ENCODE measurements at regions of chr2 and their contacts with region 1.

Region 1: GRCh38 chr2:85354286-85355072 is at the starts of genes ELMOD3 and RETSAT:
- DNase-seq: peak; percentile 97
- H3K4me3 Mint-ChIP-seq: peak within 1 kb of the TSS; percentile 100
- H3K27ac Mint-ChIP-seq: peak within 1 kb of the TSS; percentile 98
- H3K4me1 Mint-ChIP-seq: peaks cover 44% of the 10 kb centered on the region
- H3K27me3 Mint-ChIP-seq: no peaks in the 10 kb centered on the region
- total RNA-seq, gene ELMOD3: 13.8 and 15.9 TPM in 2 replicates
- total RNA-seq, gene RETSAT: 23.4 and 25.9 TPM in 2 replicates

Region 2: DNA sequence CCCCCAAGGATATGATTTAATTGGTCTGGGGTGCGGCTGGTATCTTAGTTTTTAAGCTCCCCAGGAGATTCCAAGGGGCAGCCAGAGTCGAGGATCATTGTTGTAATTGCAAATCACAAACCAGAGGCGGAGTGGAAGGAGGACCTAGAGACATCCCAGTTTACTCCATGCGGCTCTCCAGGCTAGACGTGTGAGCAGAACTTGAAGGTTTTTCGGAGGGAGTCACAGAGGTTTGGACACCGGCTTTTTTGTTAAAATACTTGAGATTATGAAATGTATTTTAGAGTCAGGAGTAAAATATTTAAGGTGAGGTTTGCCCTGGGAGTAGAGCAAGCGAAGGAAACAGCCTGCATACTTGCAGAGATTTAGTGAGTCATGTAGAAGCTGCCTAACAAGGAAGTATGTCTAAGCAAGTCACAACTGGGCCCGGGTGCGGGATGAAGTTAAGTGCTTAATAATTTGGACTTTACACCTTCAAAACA is 66.2 kb before region 1 on chr2:
- intact Hi-C with region 1: loop called (anchors 1 kb)
- DNase-seq: no peak
- H3K4me3 Mint-ChIP-seq: no peak overlapping the region
- H3K27ac Mint-ChIP-seq: no peak overlapping the region
- H3K4me1 Mint-ChIP-seq: peaks cover 29% of the 10 kb centered on the region
- H3K27me3 Mint-ChIP-seq: no peaks in the 10 kb centered on the region

Region 3: GRCh38 chr2:85409845-85410583 is 55.5 kb after region 1 on chr2 and contains the start of gene CAPG:
- intact Hi-C with region 1: loop called (anchors 1 kb)
- DNase-seq: peak; percentile 33
- H3K4me3 Mint-ChIP-seq: peak within 1 kb of the TSS; percentile 82
- H3K27ac Mint-ChIP-seq: peak within 1 kb of the TSS; percentile 66
- H3K4me1 Mint-ChIP-seq: peaks cover 60% of the 10 kb centered on the region
- H3K27me3 Mint-ChIP-seq: peaks cover 7% of the 10 kb centered on the region
- total RNA-seq, gene CAPG: 35.5 and 38.2 TPM in 2 replicates

Region 4: DNA sequence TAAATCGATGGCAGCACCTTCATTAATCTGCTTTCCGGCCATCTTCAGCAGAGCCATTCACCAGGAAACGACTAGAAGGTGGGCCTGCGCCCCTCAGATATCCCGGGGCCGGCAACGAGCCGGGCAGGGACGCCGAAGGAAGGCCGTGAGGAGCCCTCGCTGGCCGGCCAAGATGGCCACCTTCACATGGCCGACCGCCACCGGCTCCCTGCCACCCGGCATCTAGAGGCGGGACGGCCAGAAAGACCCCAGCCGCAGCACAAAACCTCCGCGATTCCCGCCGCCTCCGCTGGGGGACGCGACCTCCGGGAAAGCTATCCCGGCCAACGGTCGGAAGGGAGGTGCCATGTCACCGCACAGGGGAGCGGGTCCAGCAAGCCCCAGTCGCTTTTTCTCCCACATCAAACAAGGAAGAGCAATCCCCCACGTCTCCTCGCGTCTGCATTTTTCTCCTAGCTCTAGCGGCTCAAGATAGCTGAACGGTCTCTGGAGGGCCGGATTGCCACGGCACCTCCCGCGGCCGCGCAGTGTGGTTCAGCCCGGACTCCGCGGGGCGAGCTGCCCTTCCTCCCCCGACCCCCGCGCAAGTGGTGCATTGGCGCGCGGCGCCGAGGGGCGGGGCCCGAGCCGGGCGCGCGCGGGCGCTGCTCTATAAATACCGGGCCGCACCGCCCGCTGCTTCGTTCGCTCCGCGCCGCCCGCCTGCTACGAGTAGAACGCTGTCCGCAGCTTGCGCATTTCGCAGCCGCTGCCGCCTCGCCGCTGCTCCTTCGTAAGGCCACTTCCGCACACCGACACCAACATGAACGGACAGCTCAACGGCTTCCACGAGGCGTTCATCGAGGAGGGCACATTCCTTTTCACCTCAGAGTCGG is 184.2 kb after region 1 on chr2 and contains the start of gene MAT2A:
- intact Hi-C with region 1: loop called (anchors 1 kb)
- DNase-seq: peak; percentile 88
- H3K4me3 Mint-ChIP-seq: peak within 1 kb of the TSS; percentile 99
- H3K27ac Mint-ChIP-seq: peak within 1 kb of the TSS; percentile 97
- H3K4me1 Mint-ChIP-seq: peaks cover 56% of the 10 kb centered on the region
- H3K27me3 Mint-ChIP-seq: no peaks in the 10 kb centered on the region
- total RNA-seq, gene MAT2A: 461 and 480 TPM in 2 replicates

Region 5: DNA sequence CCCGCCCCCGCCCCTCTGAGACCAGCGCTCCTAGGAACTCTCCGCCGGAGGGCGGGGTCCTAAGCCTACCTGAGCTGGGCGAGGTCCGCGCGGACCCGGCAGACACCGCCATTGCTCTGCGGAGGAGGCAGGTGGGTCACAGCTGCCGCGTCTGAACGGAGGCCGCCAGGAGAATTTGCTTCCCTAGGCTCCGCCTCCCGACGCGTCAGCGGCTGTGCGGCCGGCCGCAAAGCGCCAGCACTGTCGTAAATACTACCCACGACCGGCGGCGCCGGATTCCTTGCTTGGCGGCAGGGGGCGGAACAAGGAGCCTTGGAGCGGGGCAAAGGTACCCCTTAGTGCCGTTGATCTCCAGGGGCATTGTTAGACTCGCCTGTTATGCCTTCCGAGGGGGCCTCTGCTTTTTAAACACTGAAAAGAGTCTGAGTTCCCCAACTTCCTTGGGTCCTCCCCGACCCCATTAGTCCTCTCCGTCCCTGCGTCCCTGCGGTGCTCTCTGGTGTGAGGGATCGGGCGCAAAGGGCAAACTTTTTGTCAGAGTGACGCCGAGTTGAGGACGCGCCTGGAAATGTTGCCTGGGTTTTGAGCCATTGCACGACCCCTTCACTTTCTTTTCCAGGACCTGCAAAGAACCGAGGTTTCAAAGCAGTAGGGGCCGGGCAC is 207.0 kb after region 1 on chr2 and contains the start of gene GGCX:
- intact Hi-C with region 1: loop called (anchors 1 kb)
- DNase-seq: peak; percentile 88
- H3K4me3 Mint-ChIP-seq: peak within 1 kb of the TSS; percentile 94
- H3K27ac Mint-ChIP-seq: peak within 1 kb of the TSS; percentile 81
- H3K4me1 Mint-ChIP-seq: peaks cover 36% of the 10 kb centered on the region
- H3K27me3 Mint-ChIP-seq: no peaks in the 10 kb centered on the region
- total RNA-seq, gene GGCX: 26.2 and 28.3 TPM in 2 replicates

Region 6: GRCh38 chr2:86105252-86105968 is 750.9 kb after region 1 on chr2 and contains the start of gene POLR1A:
- intact Hi-C with region 1: loop called (anchors 1 kb)
- DNase-seq: peak; percentile 84
- H3K4me3 Mint-ChIP-seq: peak within 1 kb of the TSS; percentile 91
- H3K27ac Mint-ChIP-seq: peak within 1 kb of the TSS; percentile 99
- H3K4me1 Mint-ChIP-seq: peaks cover 55% of the 10 kb centered on the region
- H3K27me3 Mint-ChIP-seq: no peaks in the 10 kb centered on the region
- total RNA-seq, gene POLR1A: 69.7 and 74.6 TPM in 2 replicates

Region 7: DNA sequence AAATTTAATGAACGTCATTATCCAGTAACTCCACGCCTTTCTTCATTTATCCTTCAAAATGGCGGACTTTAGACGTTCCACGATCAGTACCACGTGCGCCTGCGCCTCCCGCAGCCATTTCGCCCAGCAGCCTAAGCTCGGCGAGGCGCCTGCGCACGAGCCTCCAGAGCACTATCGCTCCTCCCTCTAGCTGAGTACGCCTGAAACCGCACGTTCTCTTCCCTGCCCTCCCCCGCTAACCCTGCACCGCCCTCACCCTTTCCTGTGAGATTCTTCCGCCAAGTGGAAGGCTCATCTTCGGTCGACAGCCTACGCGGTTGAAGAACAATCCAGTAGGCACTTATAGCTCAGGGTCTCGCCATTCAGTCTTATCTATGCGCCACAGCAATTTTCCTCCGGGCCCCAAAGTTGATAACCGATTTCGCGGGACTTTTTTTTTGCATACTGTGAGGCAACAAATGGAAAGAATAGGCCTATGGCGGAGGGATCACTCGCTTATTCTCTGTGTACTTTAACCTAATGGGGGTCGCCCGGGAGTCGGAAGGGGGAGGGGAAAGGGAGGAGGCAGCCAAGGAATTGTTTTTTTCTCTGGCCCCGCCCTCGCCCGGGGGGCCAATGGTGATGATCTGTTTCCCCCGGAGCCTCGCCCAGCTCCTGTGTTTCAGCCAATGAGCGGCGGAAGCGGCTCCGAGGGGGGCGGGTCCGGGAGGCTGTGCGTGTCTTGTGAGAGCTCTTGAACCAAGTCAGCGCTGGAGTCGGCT is 1086.3 kb after region 1 on chr2 and contains the start of gene KDM3A:
- intact Hi-C with region 1: loop called (anchors 5 kb)
- DNase-seq: peak; percentile 99
- H3K4me3 Mint-ChIP-seq: peak within 1 kb of the TSS; percentile 96
- H3K27ac Mint-ChIP-seq: peak within 1 kb of the TSS; percentile 98
- H3K4me1 Mint-ChIP-seq: peaks cover 50% of the 10 kb centered on the region
- H3K27me3 Mint-ChIP-seq: peaks cover 11% of the 10 kb centered on the region
- total RNA-seq, gene KDM3A: 61.6 and 67.3 TPM in 2 replicates

Measured in activated T-helper 1 cell treated with anti-CD3 and anti-CD28 coated beads, Interleukin-12 subunit alpha, Interleukin-12 subunit beta, Interleukin-2, Interleukin-4 antibody, amounts not matched to agents 30 ng/mL and 10 ng/mL and 1 ng/mL, durations not matched to agents 14 hours and 24 hours and 36 hours (primary cell).